Activated CD4-positive, alpha-beta memory T cell treated with anti-CD3 and anti-CD28 coated beads for 36 hours (primary cell): ENCODE measurements at regions of chr1 and their contacts with region 1.

Region 1: DNA sequence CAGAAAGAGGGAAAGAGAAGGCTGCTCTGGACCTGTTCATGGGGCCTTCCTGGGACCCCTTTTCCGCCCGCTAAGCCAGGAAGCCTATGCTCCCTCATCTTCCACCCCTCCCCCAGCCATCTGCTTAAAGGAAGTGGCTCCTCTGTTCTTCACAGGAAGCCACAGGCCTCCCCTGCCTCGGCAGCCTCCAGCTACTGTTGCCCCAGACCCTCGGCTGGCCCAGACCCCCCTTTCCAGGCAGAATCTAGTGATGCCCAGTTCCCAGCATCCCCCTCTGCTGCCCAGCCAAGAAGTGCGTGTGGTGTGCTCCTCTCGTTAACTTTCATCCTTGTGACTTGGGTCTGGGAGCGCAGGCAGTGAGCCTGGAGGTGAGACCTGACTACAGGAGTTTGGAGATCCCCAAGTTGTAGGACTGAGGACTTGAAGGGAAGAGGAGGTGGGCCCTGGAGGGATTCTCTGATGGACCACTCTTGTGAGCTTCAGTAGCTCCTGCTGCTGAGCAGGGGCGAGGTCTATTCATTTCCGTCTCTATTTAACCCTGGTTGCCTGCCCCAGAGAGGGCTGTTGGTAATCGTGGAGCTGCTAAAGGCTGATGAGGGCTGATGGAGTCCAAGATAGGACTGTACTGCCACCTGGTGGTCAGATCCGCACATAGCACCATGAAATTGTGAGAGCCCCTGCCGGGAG is 9.1 kb downstream of the IFI6 start:
- DNase-seq: peak; percentile 94
- H3K4me3 Mint-ChIP-seq: peak overlapping the region; percentile 67
- H3K27ac Mint-ChIP-seq: peak overlapping the region; percentile 99
- H3K4me1 Mint-ChIP-seq: peaks cover 44% of the 10 kb centered on the region
- H3K27me3 Mint-ChIP-seq: no peaks in the 10 kb centered on the region

Region 2: GRCh38 chr1:27416387-27417111 is 246.3 kb before region 1 on chr1:
- CTCF ChIA-PET with region 1: interaction called, 15 read pairs
- POLR2A ChIA-PET with region 1: no interaction called
- intact Hi-C with region 1: loop called (anchors 2 kb)
- DNase-seq: peak; percentile 70
- H3K4me3 Mint-ChIP-seq: no peak overlapping the region
- H3K27ac Mint-ChIP-seq: no peak overlapping the region
- H3K4me1 Mint-ChIP-seq: peaks cover 39% of the 10 kb centered on the region
- H3K27me3 Mint-ChIP-seq: no peaks in the 10 kb centered on the region

Region 3: GRCh38 chr1:27536767-27537166 is 126.1 kb before region 1 on chr1:
- CTCF ChIA-PET with region 1: no interaction called
- POLR2A ChIA-PET with region 1: no interaction called
- intact Hi-C with region 1: no loop called
- DNase-seq: no peak
- H3K4me3 Mint-ChIP-seq: no peak overlapping the region
- H3K27ac Mint-ChIP-seq: no peak overlapping the region
- H3K4me1 Mint-ChIP-seq: peaks cover 12% of the 10 kb centered on the region
- H3K27me3 Mint-ChIP-seq: no peaks in the 10 kb centered on the region

Region 4: GRCh38 chr1:27556781-27557595 is 105.9 kb before region 1 on chr1:
- CTCF ChIA-PET with region 1: interaction called, 59 read pairs
- POLR2A ChIA-PET with region 1: no interaction called
- intact Hi-C with region 1: no loop called
- DNase-seq: peak; percentile 81
- H3K4me3 Mint-ChIP-seq: no peak overlapping the region
- H3K27ac Mint-ChIP-seq: peak overlapping the region; percentile 49
- H3K4me1 Mint-ChIP-seq: peaks cover 17% of the 10 kb centered on the region
- H3K27me3 Mint-ChIP-seq: no peaks in the 10 kb centered on the region

Region 5: GRCh38 chr1:27609210-27609555 is 53.7 kb before region 1 on chr1:
- CTCF ChIA-PET with region 1: interaction called, 312 read pairs
- POLR2A ChIA-PET with region 1: interaction called, 5 read pairs
- intact Hi-C with region 1: loop called (anchors 1 kb)
- DNase-seq: no peak
- H3K4me3 Mint-ChIP-seq: no peak overlapping the region
- H3K27ac Mint-ChIP-seq: no peak overlapping the region
- H3K4me1 Mint-ChIP-seq: peaks cover 15% of the 10 kb centered on the region
- H3K27me3 Mint-ChIP-seq: no peaks in the 10 kb centered on the region

Region 6: GRCh38 chr1:27632387-27633297 is 30.2 kb before region 1 on chr1:
- CTCF ChIA-PET with region 1: interaction called, 15 read pairs
- POLR2A ChIA-PET with region 1: no interaction called
- intact Hi-C with region 1: loop called (anchors 1 kb)
- DNase-seq: peak; percentile 80
- H3K4me3 Mint-ChIP-seq: peak overlapping the region; percentile 24
- H3K27ac Mint-ChIP-seq: peak overlapping the region; percentile 74
- H3K4me1 Mint-ChIP-seq: peaks cover 69% of the 10 kb centered on the region
- H3K27me3 Mint-ChIP-seq: no peaks in the 10 kb centered on the region

Region 7: DNA sequence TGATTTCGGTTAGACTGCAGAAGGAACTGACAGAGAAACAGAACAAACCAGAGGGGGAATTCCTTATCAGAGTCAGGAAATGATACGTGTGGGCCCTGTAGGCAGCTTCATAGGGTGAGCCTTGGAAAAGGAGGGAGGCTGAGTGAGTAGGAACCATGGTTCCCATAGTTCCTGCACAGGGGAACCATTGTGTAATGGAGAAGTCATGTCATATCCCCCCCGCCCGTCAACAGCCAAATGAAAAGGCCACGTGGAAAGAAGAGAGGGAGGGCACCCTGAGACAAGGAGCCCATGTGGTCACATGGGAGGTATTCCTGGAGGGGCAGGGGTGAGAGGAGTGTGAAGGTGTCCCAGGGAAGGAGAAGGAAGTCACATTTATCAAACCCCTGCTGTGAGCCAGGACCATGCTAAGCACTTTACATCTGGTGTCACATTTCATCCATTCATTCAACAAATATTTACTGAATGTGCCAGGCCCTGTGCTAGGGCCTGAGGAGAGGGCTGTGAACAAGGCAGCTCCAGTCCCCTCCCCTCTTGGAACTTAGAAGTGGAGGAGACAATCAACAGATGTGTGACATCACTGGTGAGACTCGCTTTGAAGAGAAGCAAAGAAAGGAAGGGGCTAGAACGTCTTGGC is 12.2 kb before region 1 on chr1:
- CTCF ChIA-PET with region 1: interaction called, 18 read pairs
- POLR2A ChIA-PET with region 1: interaction called, 3 read pairs
- intact Hi-C with region 1: loop called (anchors 2 kb)
- DNase-seq: no peak
- H3K4me3 Mint-ChIP-seq: no peak overlapping the region
- H3K27ac Mint-ChIP-seq: peak overlapping the region; percentile 8
- H3K4me1 Mint-ChIP-seq: peaks cover 11% of the 10 kb centered on the region
- H3K27me3 Mint-ChIP-seq: no peaks in the 10 kb centered on the region

Region 8: DNA sequence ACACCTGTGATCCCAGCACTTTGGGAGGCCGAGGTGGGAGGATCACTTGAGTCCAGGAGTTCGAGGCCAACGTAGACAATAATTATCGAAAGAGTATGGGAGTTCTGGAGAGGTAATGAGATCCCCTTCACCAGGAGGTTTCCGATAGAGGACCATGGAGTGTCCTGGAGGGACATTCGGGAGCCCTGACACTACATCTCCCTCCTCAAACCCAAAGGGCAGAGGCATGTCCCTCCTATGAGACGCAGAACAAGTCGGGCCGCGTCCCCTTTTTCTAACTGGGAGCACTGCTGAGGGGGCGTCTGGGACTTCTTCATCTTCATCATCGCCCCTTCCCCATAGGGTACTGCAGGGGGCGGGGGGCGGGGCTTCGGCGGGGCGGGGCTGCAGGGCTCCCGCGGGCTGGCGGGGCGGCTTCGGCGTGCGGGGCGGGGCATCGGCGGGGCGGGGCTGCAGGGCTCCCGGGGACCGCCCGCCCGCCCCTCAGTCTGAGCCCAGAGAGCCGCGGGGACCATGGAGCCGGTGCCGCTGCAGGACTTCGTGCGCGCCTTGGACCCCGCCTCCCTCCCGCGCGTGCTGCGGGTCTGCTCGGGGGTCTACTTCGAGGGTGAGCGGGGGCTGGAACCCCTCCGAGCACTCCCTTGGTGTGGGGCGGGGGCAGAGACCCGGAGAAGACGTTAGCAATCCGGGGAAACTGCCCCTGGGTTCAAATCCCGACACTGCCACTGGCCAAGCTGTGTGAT is 209.4 kb after region 1 on chr1 and contains the start of gene THEMIS2:
- CTCF ChIA-PET with region 1: no interaction called
- POLR2A ChIA-PET with region 1: no interaction called
- intact Hi-C with region 1: no loop called
- DNase-seq: peak; percentile 87
- H3K4me3 Mint-ChIP-seq: peak within 1 kb of the TSS; percentile 92
- H3K27ac Mint-ChIP-seq: peak within 1 kb of the TSS; percentile 84
- H3K4me1 Mint-ChIP-seq: peaks cover 37% of the 10 kb centered on the region
- H3K27me3 Mint-ChIP-seq: no peaks in the 10 kb centered on the region
- total RNA-seq, gene THEMIS2: 27.4 to 29.3 TPM

Region 9: GRCh38 chr1:28631713-28632112 is 968.9 kb after region 1 on chr1:
- CTCF ChIA-PET with region 1: no interaction called
- POLR2A ChIA-PET with region 1: no interaction called
- intact Hi-C with region 1: no loop called
- DNase-seq: no peak
- H3K4me3 Mint-ChIP-seq: no peak overlapping the region
- H3K27ac Mint-ChIP-seq: no peak overlapping the region
- H3K4me1 Mint-ChIP-seq: peaks cover 8% of the 10 kb centered on the region
- H3K27me3 Mint-ChIP-seq: no peaks in the 10 kb centered on the region